GM10248 (cell line): ENCODE measurements at regions of chr17 and their contacts with region 1.

Region 1: GRCh38 chr17:43367737-43368242 is 31.0 kb upstream of the ARL4D start:
- DNase-seq: peak; percentile 60
- CTCF ChIP-seq: no peak

Region 2: GRCh38 chr17:43211480-43212402 is 156.0 kb before region 1 on chr17 and contains the start of gene TMEM106A:
- CTCF ChIA-PET with region 1: no interaction called
- POLR2A ChIA-PET with region 1: interaction called, 13 read pairs
- DNase-seq: peak; percentile 94
- CTCF ChIP-seq: peak; percentile 6

Region 3: DNA sequence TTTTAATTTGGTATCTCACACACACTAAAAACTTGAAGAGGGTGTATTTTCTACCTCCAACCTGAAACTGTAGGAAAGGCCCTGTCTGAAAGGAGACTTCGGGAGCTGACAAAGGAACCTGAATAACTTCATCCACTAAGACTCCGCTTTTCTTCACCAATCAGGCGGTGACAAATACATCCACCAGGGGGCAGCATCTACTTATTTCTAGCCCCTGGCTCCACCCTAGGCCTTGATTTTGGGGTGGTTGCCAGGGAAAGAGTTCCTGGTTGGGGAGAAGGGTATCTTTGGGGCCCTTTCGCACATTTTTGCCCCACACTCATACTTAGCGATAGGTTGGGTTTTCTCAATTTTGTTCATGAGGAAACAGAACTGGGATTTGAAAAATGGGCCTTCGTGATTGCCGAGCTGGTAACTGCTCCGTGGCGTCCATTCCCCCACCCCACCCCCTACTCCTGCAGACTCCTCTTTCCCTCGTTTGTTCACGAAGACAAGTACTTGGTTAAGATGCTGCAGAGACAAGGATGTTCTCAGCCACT is 26.2 kb after region 1 on chr17:
- CTCF ChIA-PET with region 1: interaction called, 6 read pairs
- POLR2A ChIA-PET with region 1: interaction called, 10 read pairs
- DNase-seq: peak; percentile 86
- CTCF ChIP-seq: peak; percentile 83

Region 4: DNA sequence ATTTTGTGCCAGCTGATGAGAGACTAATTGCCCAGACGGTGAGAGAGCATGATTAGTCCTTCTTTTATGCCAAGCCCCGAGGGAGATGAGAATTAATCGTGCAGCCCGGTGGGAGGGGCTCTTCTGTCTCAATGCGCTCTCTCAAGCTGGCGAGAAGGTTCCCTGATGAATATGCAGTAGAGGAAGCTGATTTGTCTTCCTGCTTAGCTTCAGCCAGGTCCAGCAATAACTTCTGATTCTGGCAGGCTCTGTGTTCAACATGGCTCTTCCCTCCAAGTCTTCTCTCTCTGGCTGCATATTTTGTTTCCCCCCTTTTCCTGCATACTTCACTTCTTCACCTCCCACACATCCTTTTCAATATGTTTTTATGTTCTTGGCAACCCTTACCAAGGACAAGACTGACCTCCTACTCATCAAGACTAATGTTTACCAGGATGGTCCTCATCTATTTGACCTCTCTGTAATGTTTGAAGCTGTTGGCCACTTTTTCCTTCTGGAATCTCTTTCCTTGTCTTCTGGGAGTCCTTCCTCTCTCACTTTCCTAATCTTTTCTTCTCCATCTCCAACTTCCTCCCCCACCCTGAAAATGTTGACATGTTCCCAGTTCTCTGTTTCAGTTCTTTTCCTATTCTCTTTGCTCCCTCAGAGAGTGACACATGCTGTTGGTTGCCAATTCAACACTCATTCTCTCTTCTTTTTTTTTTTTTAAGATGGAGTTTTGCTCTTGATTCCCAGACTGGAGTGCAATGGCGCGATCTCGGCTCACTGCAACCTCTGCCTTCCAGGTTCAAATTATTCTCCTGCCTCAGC is 64.1 kb after region 1 on chr17:
- CTCF ChIA-PET with region 1: no interaction called
- POLR2A ChIA-PET with region 1: no interaction called
- DNase-seq: no peak
- CTCF ChIP-seq: no peak

Region 5: GRCh38 chr17:43471585-43472160 is 103.9 kb after region 1 on chr17:
- CTCF ChIA-PET with region 1: no interaction called
- POLR2A ChIA-PET with region 1: no interaction called
- DNase-seq: no peak
- CTCF ChIP-seq: no peak